ENCODE measurements at regions of chr12 and their contacts with region 1.

Region 1: GRCh38 chr12:121786441-121786825 is 7.1 kb downstream of the RHOF start:
- DNase-seq: no peak
- H3K4me3 ChIP-seq: no peak overlapping the region
- CTCF ChIP-seq: no peak

Region 2: GRCh38 chr12:121697098-121697698 is 89.2 kb before region 1 on chr12:
- CTCF ChIA-PET with region 1: interaction called, 191 read pairs
- POLR2A ChIA-PET with region 1: no interaction called
- DNase-seq: no peak
- H3K4me3 ChIP-seq: no peak overlapping the region
- CTCF ChIP-seq: no peak

Region 3: GRCh38 chr12:121765573-121765972 is 20.9 kb before region 1 on chr12:
- CTCF ChIA-PET with region 1: interaction called, 13 read pairs
- POLR2A ChIA-PET with region 1: no interaction called
- DNase-seq: no peak
- H3K4me3 ChIP-seq: no peak overlapping the region
- CTCF ChIP-seq: no peak

Measured in AG04449 (cell line).